ENCODE measurements at regions of chr3 and their contacts with region 1.

Region 1: GRCh38 chr3:6079561-6080179 is 781.2 kb upstream of the GRM7 start:
- DNase-seq: no peak
- H3K4me3 Mint-ChIP-seq: no peak overlapping the region
- H3K27ac Mint-ChIP-seq: no peak overlapping the region
- H3K4me1 Mint-ChIP-seq: no peaks in the 10 kb centered on the region
- H3K27me3 Mint-ChIP-seq: no peaks in the 10 kb centered on the region
- CTCF ChIP-seq: no peak

Region 2: GRCh38 chr3:5809586-5810246 is 270.0 kb before region 1 on chr3:
- CTCF ChIA-PET with region 1: no interaction called
- intact Hi-C with region 1: loop called (anchors 10 kb)
- DNase-seq: no peak
- H3K4me3 Mint-ChIP-seq: no peak overlapping the region
- H3K27ac Mint-ChIP-seq: no peak overlapping the region
- H3K4me1 Mint-ChIP-seq: no peaks in the 10 kb centered on the region
- H3K27me3 Mint-ChIP-seq: no peaks in the 10 kb centered on the region
- CTCF ChIP-seq: no peak

Region 3: GRCh38 chr3:5974630-5975322 is 104.9 kb before region 1 on chr3:
- CTCF ChIA-PET with region 1: no interaction called
- intact Hi-C with region 1: no loop called
- DNase-seq: no peak
- H3K4me3 Mint-ChIP-seq: no peak overlapping the region
- H3K27ac Mint-ChIP-seq: no peak overlapping the region
- H3K4me1 Mint-ChIP-seq: no peaks in the 10 kb centered on the region
- H3K27me3 Mint-ChIP-seq: no peaks in the 10 kb centered on the region
- CTCF ChIP-seq: no peak

Region 4: DNA sequence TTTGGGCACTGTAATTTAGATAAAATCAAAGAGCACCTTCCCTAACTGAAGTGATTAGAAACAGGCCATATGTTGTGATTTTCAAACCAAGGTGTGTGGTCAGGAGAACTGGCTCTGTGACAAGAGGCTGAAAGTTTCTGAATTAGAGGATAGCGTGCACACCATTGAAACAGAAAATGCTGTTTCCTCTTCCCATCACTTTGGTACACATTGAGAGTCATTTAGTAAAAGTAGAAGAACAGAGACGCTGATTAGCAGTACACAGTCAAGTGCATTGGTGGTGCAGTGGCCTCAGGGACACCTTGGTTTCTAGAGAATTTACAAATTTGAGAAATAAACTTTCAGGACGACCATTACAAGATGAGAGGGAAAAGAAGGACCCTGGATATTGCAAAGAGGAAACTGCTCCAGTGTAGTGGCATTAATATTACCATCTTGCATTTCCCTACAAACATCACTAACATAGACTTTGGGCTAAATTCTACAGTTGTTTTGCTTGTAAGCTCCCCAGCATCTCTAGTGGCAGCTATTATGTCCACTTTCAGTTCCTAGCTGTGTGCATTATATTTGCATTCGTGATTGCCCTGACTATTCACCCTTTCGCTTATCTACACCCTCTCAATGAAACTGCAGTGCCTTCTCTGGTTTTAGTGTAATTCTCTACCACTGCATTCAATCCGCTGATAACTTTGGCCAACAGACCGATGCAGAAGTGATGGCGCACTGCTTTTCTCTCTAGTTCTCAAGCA is 53.2 kb after region 1 on chr3:
- CTCF ChIA-PET with region 1: no interaction called
- intact Hi-C with region 1: no loop called
- DNase-seq: no peak
- H3K4me3 Mint-ChIP-seq: no peak overlapping the region
- H3K27ac Mint-ChIP-seq: no peak overlapping the region
- H3K4me1 Mint-ChIP-seq: no peaks in the 10 kb centered on the region
- H3K27me3 Mint-ChIP-seq: no peaks in the 10 kb centered on the region
- CTCF ChIP-seq: no peak

Measured in Calu3 (cell line).